ENCODE measurements at regions of chr6 and their contacts with region 1.

Region 1: GRCh38 chr6:112029045-112029822 is 24.7 kb upstream of the CCN6 start:
- DNase-seq: peak; percentile 44 to 72
- ATAC-seq: no peak

Region 2: GRCh38 chr6:111709615-111710398 is 319.4 kb before region 1 on chr6:
- intact Hi-C with region 1: loop called in 1 of 2 experiments (anchors 10 kb)
- DNase-seq: peak; percentile 59
- ATAC-seq: peak; percentile 78

Region 3: DNA sequence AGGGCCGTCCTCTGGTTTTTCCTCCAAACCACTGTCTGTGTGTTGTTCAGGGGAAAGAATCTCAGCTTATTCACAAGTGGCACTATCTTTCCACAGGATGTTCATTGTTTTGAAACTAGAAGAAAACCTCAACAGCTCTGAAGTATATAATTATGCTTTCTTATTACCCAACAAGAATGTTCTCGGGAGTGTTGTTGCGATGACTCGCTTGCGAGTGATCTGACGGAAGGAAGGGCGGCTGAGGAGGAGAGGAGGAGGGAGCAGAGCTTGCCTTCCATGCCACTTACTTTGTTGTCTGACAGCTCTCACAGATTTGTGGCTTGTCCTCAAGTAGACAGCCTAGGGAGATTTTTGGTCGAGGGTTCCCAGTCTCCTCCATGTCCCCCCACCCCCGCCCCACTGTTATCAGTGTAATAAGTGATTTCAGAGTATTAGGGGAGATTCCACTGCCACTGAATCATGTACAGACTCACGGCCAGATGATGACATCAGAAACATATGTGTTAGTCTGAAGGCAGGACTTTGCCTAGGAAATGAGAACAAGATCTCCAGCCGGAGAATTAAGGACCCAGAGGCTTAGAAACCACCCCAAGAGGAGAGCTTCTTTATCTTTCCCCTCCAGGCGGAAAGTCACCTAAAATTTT is 56.0 kb before region 1 on chr6:
- intact Hi-C with region 1: no loop called
- DNase-seq: no peak
- ATAC-seq: no peak

Region 4: GRCh38 chr6:112117554-112117953 is 88.3 kb after region 1 on chr6:
- intact Hi-C with region 1: no loop called
- DNase-seq: no peak
- ATAC-seq: no peak

Region 5: GRCh38 chr6:112232845-112233256 is 203.6 kb after region 1 on chr6:
- intact Hi-C with region 1: no loop called
- DNase-seq: no peak
- ATAC-seq: no peak

Region 6: GRCh38 chr6:112475083-112475482 is 445.8 kb after region 1 on chr6:
- intact Hi-C with region 1: no loop called
- DNase-seq: no peak
- ATAC-seq: no peak

Measured in left colon (tissue), 2 donors.